ENCODE measurements at regions of chr10 and their contacts with region 1.

Region 1: GRCh38 chr10:77391605-77392235 is 245.9 kb downstream of the KCNMA1 start:
- DNase-seq: peak; percentile 63
- H3K4me3 ChIP-seq: no peak overlapping the region
- H3K27ac ChIP-seq: peak overlapping the region; percentile 90
- H3K4me1 ChIP-seq: peaks cover 48% of the 10 kb centered on the region
- H3K27me3 ChIP-seq: no peaks in the 10 kb centered on the region
- CTCF ChIP-seq: peak; percentile 56 to 57
- POLR2A ChIP-seq: no peak

Region 2: GRCh38 chr10:77173615-77174461 is 217.9 kb before region 1 on chr10:
- CTCF ChIA-PET with region 1: interaction called, 27 read pairs
- POLR2A ChIA-PET with region 1: no interaction called
- dilution Hi-C with region 1: no loop called
- intact Hi-C with region 1: no loop called
- DNase-seq: peak; percentile 75
- H3K4me3 ChIP-seq: no peak overlapping the region
- H3K27ac ChIP-seq: no peak overlapping the region
- H3K4me1 ChIP-seq: peaks cover under 1% of the 10 kb centered on the region
- H3K27me3 ChIP-seq: no peaks in the 10 kb centered on the region
- CTCF ChIP-seq: peak; percentile 86 to 90
- POLR2A ChIP-seq: no peak

Region 3: DNA sequence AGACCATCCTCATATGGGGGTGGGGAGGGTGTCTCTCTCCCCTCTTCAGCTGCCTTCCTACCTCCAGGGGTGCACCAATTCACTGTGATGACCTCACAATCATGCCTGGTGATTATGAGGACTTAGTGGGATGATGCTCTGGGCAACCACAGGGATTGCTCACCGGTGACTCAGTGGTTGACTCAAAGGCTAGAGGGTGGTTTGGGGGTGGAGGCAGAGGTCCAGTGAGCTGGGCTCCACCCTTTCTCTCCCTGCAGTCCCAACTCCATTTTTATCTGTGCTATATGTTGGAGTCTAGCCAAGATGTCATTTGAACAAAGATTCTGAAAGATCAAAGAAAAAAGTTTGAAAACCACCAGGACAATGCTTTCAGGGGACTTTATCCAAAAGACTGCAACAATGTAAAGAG is 41.0 kb before region 1 on chr10:
- CTCF ChIA-PET with region 1: interaction called, 7 read pairs
- POLR2A ChIA-PET with region 1: interaction called, 3 read pairs
- dilution Hi-C with region 1: no loop called
- intact Hi-C with region 1: loop called (anchors 1 kb)
- DNase-seq: peak; percentile 80
- H3K4me3 ChIP-seq: no peak overlapping the region
- H3K27ac ChIP-seq: no peak overlapping the region
- H3K4me1 ChIP-seq: peaks cover 9% of the 10 kb centered on the region
- H3K27me3 ChIP-seq: no peaks in the 10 kb centered on the region
- CTCF ChIP-seq: no peak
- POLR2A ChIP-seq: no peak

Region 4: DNA sequence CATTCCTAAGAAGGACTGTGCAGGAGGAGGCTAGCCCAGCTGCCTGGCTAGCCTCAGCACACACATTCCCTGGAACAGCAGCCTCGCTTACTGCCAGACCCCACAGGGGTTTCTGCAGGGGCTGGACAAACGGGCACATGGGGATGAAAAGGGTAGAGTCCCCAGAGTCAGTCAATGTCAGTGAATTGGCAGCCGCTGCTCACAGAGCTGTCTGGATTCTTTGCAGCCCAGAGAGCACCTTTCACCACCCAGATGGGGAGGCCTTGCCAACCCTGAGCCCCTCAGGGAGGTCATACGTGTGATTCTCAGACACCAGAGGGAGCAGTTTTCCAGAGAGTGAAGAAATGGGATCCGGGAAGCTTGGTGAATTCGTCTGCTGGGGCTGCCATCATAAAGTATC is 102.6 kb after region 1 on chr10:
- CTCF ChIA-PET with region 1: interaction called, 4 read pairs
- POLR2A ChIA-PET with region 1: no interaction called
- dilution Hi-C with region 1: no loop called
- intact Hi-C with region 1: loop called (anchors 2 kb)
- DNase-seq: no peak
- H3K4me3 ChIP-seq: no peak overlapping the region
- H3K27ac ChIP-seq: no peak overlapping the region
- H3K4me1 ChIP-seq: no peaks in the 10 kb centered on the region
- H3K27me3 ChIP-seq: peaks cover 0 to 2% of the 10 kb centered on the region in 2 experiments
- CTCF ChIP-seq: peak in 1 of 2 donors; percentile 9
- POLR2A ChIP-seq: no peak

Region 5: DNA sequence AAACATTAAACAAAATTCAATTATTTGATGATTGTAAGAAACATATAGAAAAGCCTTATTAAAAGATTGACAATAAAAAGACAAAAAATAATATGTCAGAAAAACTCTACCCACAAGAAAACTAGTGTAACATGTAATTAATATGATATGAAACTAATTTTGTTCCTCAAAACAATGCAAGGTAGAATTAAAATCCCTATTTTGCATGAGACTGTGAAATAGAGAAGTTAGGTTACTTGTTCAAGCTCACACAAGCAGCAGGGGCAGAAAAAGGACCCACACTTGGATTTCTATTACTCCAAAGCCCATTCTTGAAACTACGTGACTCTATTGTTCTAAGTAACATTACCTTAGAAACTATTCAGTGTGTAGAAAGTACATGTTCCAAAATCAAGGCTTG is 149.5 kb after region 1 on chr10:
- CTCF ChIA-PET with region 1: no interaction called
- POLR2A ChIA-PET with region 1: no interaction called
- dilution Hi-C with region 1: no loop called
- intact Hi-C with region 1: no loop called
- DNase-seq: no peak
- H3K4me3 ChIP-seq: no peak overlapping the region
- H3K27ac ChIP-seq: no peak overlapping the region
- H3K4me1 ChIP-seq: no peaks in the 10 kb centered on the region
- H3K27me3 ChIP-seq: no peaks in the 10 kb centered on the region
- CTCF ChIP-seq: no peak
- POLR2A ChIP-seq: no peak

Region 6: DNA sequence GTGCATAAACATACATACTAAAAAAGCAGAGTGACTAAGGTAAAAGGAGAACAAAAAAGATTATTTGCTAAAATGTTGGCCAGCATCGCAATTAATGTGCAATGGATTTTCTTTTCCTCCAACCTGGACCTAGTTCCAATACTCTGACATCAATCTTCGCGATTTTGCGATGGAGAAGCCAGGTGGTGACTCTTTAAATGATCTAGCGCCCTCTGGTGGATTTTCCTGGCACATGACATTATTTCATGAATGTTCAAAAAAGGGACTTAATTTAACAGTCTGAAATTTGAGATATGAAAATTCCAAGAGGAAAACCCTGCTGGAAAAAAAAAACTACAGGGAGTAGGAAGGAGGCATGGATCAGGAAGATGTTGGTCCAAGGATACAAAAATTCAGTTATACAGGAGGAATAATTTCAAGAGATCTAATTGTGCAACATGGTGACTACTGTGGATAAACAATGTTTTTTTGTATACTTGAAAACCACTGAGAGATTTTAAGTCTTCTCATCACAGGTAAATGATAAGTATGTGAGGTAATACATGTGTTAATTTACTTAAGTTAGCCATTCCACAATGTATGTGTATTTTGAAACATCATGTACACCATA is 250.2 kb after region 1 on chr10:
- CTCF ChIA-PET with region 1: interaction called, 19 read pairs
- POLR2A ChIA-PET with region 1: no interaction called
- dilution Hi-C with region 1: no loop called
- intact Hi-C with region 1: loop called (anchors 1 kb)
- DNase-seq: peak; percentile 78
- H3K4me3 ChIP-seq: no peak overlapping the region
- H3K27ac ChIP-seq: no peak overlapping the region
- H3K4me1 ChIP-seq: no peaks in the 10 kb centered on the region
- H3K27me3 ChIP-seq: peaks cover 22 to 27% of the 10 kb centered on the region in 2 experiments
- CTCF ChIP-seq: peak; percentile 45 to 61
- POLR2A ChIP-seq: no peak

Region 7: GRCh38 chr10:77756319-77757232 is 364.9 kb after region 1 on chr10:
- CTCF ChIA-PET with region 1: interaction called, 5 read pairs
- POLR2A ChIA-PET with region 1: no interaction called
- dilution Hi-C with region 1: no loop called
- intact Hi-C with region 1: loop called (anchors 2 kb)
- DNase-seq: peak; percentile 78
- H3K4me3 ChIP-seq: no peak overlapping the region
- H3K27ac ChIP-seq: no peak overlapping the region
- H3K4me1 ChIP-seq: peaks cover 3% of the 10 kb centered on the region
- H3K27me3 ChIP-seq: no peaks in the 10 kb centered on the region
- CTCF ChIP-seq: peak; percentile 78 to 84
- POLR2A ChIP-seq: no peak

Region 8: GRCh38 chr10:78648256-78648860 is 1256.6 kb after region 1 on chr10:
- CTCF ChIA-PET with region 1: no interaction called
- POLR2A ChIA-PET with region 1: no interaction called
- dilution Hi-C with region 1: no loop called
- intact Hi-C with region 1: no loop called
- DNase-seq: no peak
- H3K4me3 ChIP-seq: no peak overlapping the region
- H3K27ac ChIP-seq: no peak overlapping the region
- H3K4me1 ChIP-seq: no peaks in the 10 kb centered on the region
- H3K27me3 ChIP-seq: peaks cover 7 to 12% of the 10 kb centered on the region in 2 experiments
- CTCF ChIP-seq: no peak
- POLR2A ChIP-seq: no peak

Measured in endothelial cell of umbilical vein (primary cell).